ENCODE measurements at regions of chr6 and their contacts with region 1.

Region 1: GRCh38 chr6:139291813-139292619 is at the start of gene TXLNB:
- DNase-seq: peak; percentile 81
- ATAC-seq: peak; percentile 64 to 86
- total RNA-seq, gene TXLNB: 52.4 to 60.4 TPM

Region 2: GRCh38 chr6:139134817-139135581 is 157.0 kb before region 1 on chr6 and contains the start of gene HECA:
- intact Hi-C with region 1: loop called in 1 of 2 experiments (anchors 10 kb)
- DNase-seq: peak; percentile 99
- ATAC-seq: peak; percentile 96
- total RNA-seq, gene HECA: 33.2 to 36.9 TPM

Region 3: GRCh38 chr6:139788303-139788702 is 496.3 kb after region 1 on chr6:
- intact Hi-C with region 1: no loop called
- DNase-seq: no peak
- ATAC-seq: no peak

Measured in left cardiac atrium (tissue), 4 donors.